GM12878 (cell line): ENCODE measurements at regions of chr18 and their contacts with region 1.

Region 1: GRCh38 chr18:79465392-79465991 is 69.8 kb downstream of the NFATC1 start:
- DNase-seq: peak; percentile 5
- ATAC-seq: peak; percentile 90
- H3K4me3 ChIP-seq: peak overlapping the region; percentile 48; the same call in 1 of the 2 replicates
- H3K27ac ChIP-seq: peak overlapping the region; percentile 54
- H3K4me1 ChIP-seq: peaks cover 32% of the 10 kb centered on the region
- H3K27me3 ChIP-seq: no peaks in the 10 kb centered on the region
- CTCF ChIP-seq: no peak
- EP300 ChIP-seq: no peak
- POLR2A ChIP-seq: peak; percentile 40; the same call in 1 of the 2 replicates
- RAD21 ChIP-seq: no peak

Region 2: DNA sequence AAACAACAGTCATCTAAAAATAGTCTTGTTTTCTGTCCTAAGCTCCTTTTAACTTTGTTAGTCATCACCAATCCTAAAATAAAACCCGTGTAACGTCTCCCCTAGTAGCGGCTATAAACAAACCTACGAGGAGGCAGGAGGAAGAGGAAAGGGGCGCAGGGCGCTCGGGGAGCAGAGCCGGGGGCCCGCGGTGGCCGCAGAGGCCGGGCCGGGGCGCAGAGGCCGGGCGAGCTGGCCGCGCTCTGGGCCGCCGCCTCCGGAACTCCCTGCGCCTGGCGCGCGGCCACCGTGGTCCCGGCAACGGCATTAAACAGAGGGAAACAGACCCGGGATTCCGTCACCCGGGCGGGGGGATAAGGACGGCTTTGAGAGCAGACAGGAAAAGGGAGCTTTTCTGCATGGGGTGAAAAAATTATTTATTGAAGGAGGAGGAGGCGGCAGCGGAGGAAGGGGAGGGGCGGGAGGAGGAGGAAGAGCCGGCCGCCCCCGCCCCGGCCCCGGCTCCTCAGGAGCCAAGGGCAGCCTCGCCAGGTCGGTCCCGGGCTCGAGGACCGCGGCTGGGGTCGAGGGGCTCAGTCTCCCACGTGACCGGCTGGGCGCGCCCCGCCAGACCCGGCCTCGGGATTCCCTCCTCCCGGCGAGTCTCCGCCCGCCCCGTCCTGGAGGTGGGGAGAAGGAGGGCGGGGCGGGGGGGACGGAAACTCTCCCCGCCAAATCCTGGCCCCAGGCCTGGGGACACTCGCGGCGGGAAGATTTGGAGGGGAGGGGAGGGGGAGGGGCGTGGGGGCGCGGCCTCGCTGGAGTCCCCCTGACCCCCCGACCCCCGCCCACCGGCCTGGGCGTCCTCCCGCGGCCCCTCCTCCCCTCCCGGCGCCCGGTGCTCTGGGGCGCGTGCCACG is 71.6 kb before region 1 on chr18:
- CTCF ChIA-PET with region 1: interaction called, 10 read pairs
- POLR2A ChIA-PET with region 1: interaction called, 3 read pairs
- RAD21 ChIA-PET with region 1: interaction called, 21 read pairs
- SMC1A ChIA-PET with region 1: interaction called, 7 read pairs
- in situ Hi-C with region 1: no loop called
- intact Hi-C with region 1: loop called (anchors 5 kb)
- DNase-seq: no peak
- ATAC-seq: peak; percentile 35
- H3K4me3 ChIP-seq: peak overlapping the region; percentile 68
- H3K27ac ChIP-seq: no peak overlapping the region
- H3K4me1 ChIP-seq: peaks cover 12% of the 10 kb centered on the region
- H3K27me3 ChIP-seq: peaks cover 2 to 21% of the 10 kb centered on the region in 2 experiments; a peak in 3 of 4 replicates
- CTCF ChIP-seq: no peak
- EP300 ChIP-seq: no peak
- POLR2A ChIP-seq: no peak
- RAD21 ChIP-seq: no peak

Region 3: DNA sequence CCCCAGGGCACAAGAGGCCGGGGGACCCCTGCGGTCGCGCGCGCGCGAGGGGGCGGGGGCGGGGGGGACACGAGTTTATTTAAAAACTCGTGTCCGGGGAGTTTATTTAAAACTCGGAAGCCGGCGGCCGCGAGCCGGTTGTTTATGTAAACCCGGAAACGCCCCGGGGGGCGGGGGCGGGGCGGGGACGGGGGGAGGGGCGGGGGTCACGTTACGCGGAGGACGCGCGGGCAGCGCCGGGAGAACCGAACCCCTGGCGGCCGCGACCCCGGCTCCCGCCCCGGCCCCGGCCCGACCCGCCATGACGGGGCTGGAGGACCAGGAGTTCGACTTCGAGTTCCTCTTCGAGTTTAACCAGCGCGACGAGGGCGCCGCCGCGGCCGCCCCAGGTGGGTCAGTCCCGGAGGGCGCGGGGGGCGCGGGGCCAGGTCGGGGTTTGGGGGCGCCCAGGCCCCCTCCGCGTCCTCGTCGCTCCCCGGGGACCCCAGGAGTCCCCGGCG is 65.4 kb before region 1 on chr18:
- CTCF ChIA-PET with region 1: interaction called, 10 read pairs
- POLR2A ChIA-PET with region 1: interaction called, 8 read pairs
- RAD21 ChIA-PET with region 1: interaction called, 21 read pairs
- SMC1A ChIA-PET with region 1: interaction called, 15 read pairs
- in situ Hi-C with region 1: no loop called
- intact Hi-C with region 1: loop called (anchors 5 kb)
- DNase-seq: no peak
- ATAC-seq: peak; percentile 15
- H3K4me3 ChIP-seq: peak overlapping the region; percentile 82; the same call in 1 of the 2 replicates
- H3K27ac ChIP-seq: no peak overlapping the region
- H3K4me1 ChIP-seq: peaks cover 21% of the 10 kb centered on the region
- H3K27me3 ChIP-seq: peaks cover 0 to 6% of the 10 kb centered on the region in 2 experiments; a peak in 1 of 4 replicates
- CTCF ChIP-seq: no peak
- EP300 ChIP-seq: no peak
- POLR2A ChIP-seq: no peak; the same call in 1 of the 2 replicates
- RAD21 ChIP-seq: no peak

Region 4: GRCh38 chr18:79405781-79406575 is 59.5 kb before region 1 on chr18:
- CTCF ChIA-PET with region 1: interaction called, 3 read pairs
- POLR2A ChIA-PET with region 1: interaction called, 8 read pairs
- RAD21 ChIA-PET with region 1: interaction called, 12 read pairs
- SMC1A ChIA-PET with region 1: interaction called, 15 read pairs
- in situ Hi-C with region 1: no loop called
- intact Hi-C with region 1: no loop called
- DNase-seq: peak; percentile 45
- ATAC-seq: peak; percentile 83
- H3K4me3 ChIP-seq: peak overlapping the region; percentile 52; the same call in 1 of the 2 replicates
- H3K27ac ChIP-seq: peak overlapping the region; percentile 56
- H3K4me1 ChIP-seq: peaks cover 31% of the 10 kb centered on the region
- H3K27me3 ChIP-seq: no peaks in the 10 kb centered on the region
- CTCF ChIP-seq: 0 out of 6 replicates have a peak, but pooled peaks of 1 of the 3 experiments have one; percentile 6
- EP300 ChIP-seq: peak in 1 of 2 experiments; percentile 27; a peak in 2 of 4 replicates
- POLR2A ChIP-seq: peak; percentile 74
- RAD21 ChIP-seq: no peak

Region 5: DNA sequence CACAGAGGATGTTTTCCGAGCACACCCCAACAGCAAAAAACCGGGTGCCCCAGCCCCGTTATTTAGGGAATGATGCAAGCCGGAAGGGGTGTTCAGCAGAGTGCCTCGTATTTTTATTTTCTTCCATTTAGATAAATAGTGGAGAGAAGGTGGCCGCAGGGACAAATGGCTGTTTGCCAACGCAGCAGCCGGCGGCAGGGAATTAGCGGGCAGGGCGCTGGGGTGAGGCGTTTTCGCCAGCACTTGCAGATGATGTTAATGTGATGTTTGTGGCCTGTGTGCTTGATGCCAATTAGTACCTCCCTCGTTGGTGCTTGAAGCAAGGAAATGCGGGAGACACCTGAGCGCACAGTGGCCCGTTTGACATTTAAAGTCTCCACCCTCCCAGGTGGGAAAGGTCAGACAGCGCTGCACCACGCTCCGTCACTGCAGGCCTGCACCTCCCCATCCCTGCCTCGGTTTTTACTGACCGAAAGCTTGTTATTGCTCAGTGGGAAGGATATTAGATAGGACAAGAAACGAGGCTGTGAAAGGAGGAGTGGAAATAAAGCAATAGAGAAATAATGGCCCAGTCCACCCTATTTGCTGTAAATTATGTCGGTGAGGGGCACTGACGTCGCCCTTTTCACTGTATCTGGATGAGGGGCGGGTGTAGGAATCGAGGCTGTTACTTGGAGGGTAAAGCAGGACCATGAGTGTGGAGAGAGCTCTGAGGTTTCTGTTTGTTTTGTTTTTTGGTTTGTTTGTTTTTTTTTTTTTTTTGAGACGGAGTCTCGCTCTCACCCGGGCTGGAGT is 30.7 kb before region 1 on chr18:
- CTCF ChIA-PET with region 1: interaction called, 4 read pairs
- POLR2A ChIA-PET with region 1: interaction called, 5 read pairs
- RAD21 ChIA-PET with region 1: interaction called, 15 read pairs
- SMC1A ChIA-PET with region 1: interaction called, 8 read pairs
- in situ Hi-C with region 1: no loop called
- intact Hi-C with region 1: loop called (anchors 2 kb)
- DNase-seq: no peak
- ATAC-seq: no peak
- H3K4me3 ChIP-seq: no peak overlapping the region
- H3K27ac ChIP-seq: no peak overlapping the region
- H3K4me1 ChIP-seq: peaks cover 15% of the 10 kb centered on the region
- H3K27me3 ChIP-seq: no peaks in the 10 kb centered on the region
- CTCF ChIP-seq: no peak
- EP300 ChIP-seq: no peak
- POLR2A ChIP-seq: no peak
- RAD21 ChIP-seq: no peak

Region 6: DNA sequence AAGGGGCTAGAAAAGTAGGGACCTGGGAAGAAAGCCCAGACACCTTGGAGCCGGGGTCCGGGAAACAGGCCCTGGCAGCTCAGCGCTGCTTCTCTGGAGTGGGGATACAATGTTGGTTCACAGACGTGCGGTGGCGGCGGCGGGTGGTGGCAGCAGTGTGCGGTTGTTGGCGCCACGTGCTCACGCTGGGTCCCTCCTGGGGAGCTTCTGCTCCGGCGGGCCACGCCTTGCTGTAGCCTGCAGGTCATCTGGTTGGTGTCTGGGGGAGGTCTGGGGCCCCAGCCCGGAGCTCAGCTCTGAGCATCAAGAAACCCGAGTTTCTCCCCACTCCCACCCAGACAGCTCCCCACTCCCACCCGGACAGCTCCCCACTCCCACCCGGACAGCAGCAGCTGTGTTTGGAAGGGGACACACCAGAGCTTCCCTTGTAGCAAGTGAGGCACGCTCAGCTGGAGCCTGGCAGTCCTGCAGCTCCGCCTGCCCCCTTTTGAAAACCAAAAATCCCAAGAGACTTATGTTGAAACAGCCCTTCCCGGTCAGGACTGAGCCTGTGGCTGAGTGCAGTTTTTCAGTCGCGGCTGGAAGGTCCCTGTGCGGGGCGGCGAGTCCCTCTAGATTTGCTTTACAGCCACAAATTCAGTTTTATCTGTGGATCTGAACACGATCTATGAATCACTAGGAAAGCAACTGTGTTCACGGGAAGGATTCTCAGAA is 22.8 kb before region 1 on chr18:
- CTCF ChIA-PET with region 1: interaction called, 4 read pairs
- POLR2A ChIA-PET with region 1: no interaction called
- RAD21 ChIA-PET with region 1: interaction called, 5 read pairs
- SMC1A ChIA-PET with region 1: interaction called, 3 read pairs
- in situ Hi-C with region 1: no loop called
- intact Hi-C with region 1: loop called (anchors 2 kb)
- DNase-seq: no peak
- ATAC-seq: peak; percentile 59
- H3K4me3 ChIP-seq: no peak overlapping the region
- H3K27ac ChIP-seq: no peak overlapping the region
- H3K4me1 ChIP-seq: peaks cover 4% of the 10 kb centered on the region; the same call in 1 of the 2 replicates
- H3K27me3 ChIP-seq: no peaks in the 10 kb centered on the region
- CTCF ChIP-seq: no peak
- EP300 ChIP-seq: no peak
- POLR2A ChIP-seq: no peak
- RAD21 ChIP-seq: no peak

Region 7: GRCh38 chr18:79507076-79507545 is 41.6 kb after region 1 on chr18:
- CTCF ChIA-PET with region 1: no interaction called
- POLR2A ChIA-PET with region 1: no interaction called
- RAD21 ChIA-PET with region 1: interaction called, 5 read pairs
- SMC1A ChIA-PET with region 1: no interaction called
- in situ Hi-C with region 1: loop called (anchors 5 kb)
- intact Hi-C with region 1: loop called (anchors 5 kb)
- DNase-seq: no peak
- ATAC-seq: peak; percentile 28
- H3K4me3 ChIP-seq: no peak overlapping the region
- H3K27ac ChIP-seq: no peak overlapping the region; the same call in 1 of the 2 replicates
- H3K4me1 ChIP-seq: peaks cover 33% of the 10 kb centered on the region
- H3K27me3 ChIP-seq: no peaks in the 10 kb centered on the region
- CTCF ChIP-seq: no peak
- EP300 ChIP-seq: no peak
- POLR2A ChIP-seq: peak; percentile 28; the same call in 1 of the 2 replicates
- RAD21 ChIP-seq: no peak